Activated naive CD4-positive, alpha-beta T cell treated with anti-CD3 and anti-CD28 coated beads for 36 hours (primary cell): ENCODE measurements at regions of chr7 and their contacts with region 1.

Region 1: GRCh38 chr7:40329601-40330153 is 194.9 kb downstream of the SUGCT start:
- DNase-seq: no peak
- H3K4me3 Mint-ChIP-seq: no peak overlapping the region
- H3K27ac Mint-ChIP-seq: no peak overlapping the region
- H3K4me1 Mint-ChIP-seq: no peaks in the 10 kb centered on the region
- H3K27me3 Mint-ChIP-seq: no peaks in the 10 kb centered on the region

Region 2: GRCh38 chr7:40232242-40232893 is 97.3 kb before region 1 on chr7:
- CTCF ChIA-PET with region 1: interaction called, 7 read pairs
- intact Hi-C with region 1: loop called (anchors 2 kb)
- DNase-seq: peak; percentile 52
- H3K4me3 Mint-ChIP-seq: no peak overlapping the region
- H3K27ac Mint-ChIP-seq: no peak overlapping the region
- H3K4me1 Mint-ChIP-seq: peaks cover 8% of the 10 kb centered on the region
- H3K27me3 Mint-ChIP-seq: no peaks in the 10 kb centered on the region

Region 3: GRCh38 chr7:40604601-40605438 is 275.1 kb after region 1 on chr7:
- CTCF ChIA-PET with region 1: interaction called, 3 read pairs
- intact Hi-C with region 1: loop called (anchors 1 kb)
- DNase-seq: peak; percentile 41
- H3K4me3 Mint-ChIP-seq: no peak overlapping the region
- H3K27ac Mint-ChIP-seq: no peak overlapping the region
- H3K4me1 Mint-ChIP-seq: peaks cover 3% of the 10 kb centered on the region
- H3K27me3 Mint-ChIP-seq: peaks cover 15% of the 10 kb centered on the region

Region 4: DNA sequence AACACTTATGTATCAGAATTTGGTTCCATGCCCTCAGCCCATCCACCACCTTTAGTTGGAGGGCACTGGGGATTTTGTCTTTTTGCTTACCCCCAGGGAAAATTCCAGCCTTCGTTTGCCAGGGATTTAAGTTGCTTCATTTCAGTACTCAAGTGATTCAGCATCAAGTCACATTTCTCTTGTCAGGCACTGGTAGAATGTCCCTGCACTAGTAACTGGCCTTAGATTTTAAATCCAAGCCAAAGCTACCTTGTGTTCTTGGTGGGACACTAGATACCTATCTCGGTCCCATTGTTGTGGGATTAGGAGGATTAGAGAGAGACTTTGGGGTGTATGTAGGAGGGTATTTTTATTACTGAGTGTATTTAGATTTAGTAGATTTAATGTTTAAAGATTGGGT is 418.2 kb after region 1 on chr7:
- CTCF ChIA-PET with region 1: no interaction called
- intact Hi-C with region 1: no loop called
- DNase-seq: no peak
- H3K4me3 Mint-ChIP-seq: no peak overlapping the region
- H3K27ac Mint-ChIP-seq: no peak overlapping the region
- H3K4me1 Mint-ChIP-seq: no peaks in the 10 kb centered on the region
- H3K27me3 Mint-ChIP-seq: no peaks in the 10 kb centered on the region

Region 5: DNA sequence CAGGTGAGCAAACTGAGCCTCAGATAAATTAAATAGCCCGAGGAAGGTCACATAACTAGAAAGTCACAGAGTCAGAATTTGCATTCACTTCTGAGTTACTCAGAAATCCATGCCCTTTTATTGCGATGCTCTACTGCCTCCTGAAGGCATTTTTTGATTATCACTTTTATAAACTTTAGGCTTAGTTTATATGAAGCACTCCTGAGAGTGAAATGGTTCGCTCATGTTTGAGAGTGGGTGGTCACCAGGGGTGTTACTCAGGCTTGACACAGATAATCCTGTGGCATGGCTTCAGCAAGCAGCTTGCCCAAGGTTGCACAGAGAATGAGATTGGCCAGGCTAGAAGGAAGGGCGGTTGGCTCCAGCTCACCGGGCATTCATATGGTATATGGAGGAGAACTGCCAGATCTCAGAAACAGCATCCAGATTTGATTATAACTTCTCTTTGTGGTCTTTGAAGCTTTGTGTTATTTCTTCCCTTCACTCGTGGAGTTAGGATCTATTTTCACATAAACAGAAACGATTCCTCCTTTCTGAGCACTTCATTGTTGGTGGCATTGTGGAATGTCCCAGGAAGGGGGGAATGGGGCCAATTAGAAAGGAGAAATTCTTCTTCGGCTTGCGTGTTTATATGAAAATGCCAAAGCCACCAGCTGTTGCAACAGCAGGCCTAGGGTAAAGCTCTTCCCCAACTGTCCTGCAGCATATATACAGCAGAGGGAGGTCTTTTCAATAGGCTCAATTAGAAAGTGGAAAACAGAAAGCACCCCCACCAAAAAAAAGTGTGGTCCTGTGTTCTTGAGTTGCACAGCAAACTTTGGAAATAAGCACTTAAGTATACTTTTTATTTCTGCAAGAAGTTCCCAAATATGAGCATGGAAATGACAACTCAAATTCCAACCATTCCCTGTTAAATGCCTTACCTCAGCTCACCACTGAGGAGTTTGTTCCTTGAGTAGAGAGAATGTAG is 433.9 kb after region 1 on chr7:
- CTCF ChIA-PET with region 1: no interaction called
- intact Hi-C with region 1: loop called (anchors 1 kb)
- DNase-seq: no peak
- H3K4me3 Mint-ChIP-seq: no peak overlapping the region
- H3K27ac Mint-ChIP-seq: no peak overlapping the region
- H3K4me1 Mint-ChIP-seq: no peaks in the 10 kb centered on the region
- H3K27me3 Mint-ChIP-seq: no peaks in the 10 kb centered on the region

Region 6: GRCh38 chr7:41696314-41696916 is 1366.7 kb after region 1 on chr7:
- CTCF ChIA-PET with region 1: no interaction called
- intact Hi-C with region 1: loop called (anchors 1 kb)
- DNase-seq: peak; percentile 50
- H3K4me3 Mint-ChIP-seq: no peak overlapping the region
- H3K27ac Mint-ChIP-seq: no peak overlapping the region
- H3K4me1 Mint-ChIP-seq: peaks cover 13% of the 10 kb centered on the region
- H3K27me3 Mint-ChIP-seq: peaks cover 54% of the 10 kb centered on the region

Region 7: GRCh38 chr7:41711283-41712064 is 1381.8 kb after region 1 on chr7:
- CTCF ChIA-PET with region 1: no interaction called
- intact Hi-C with region 1: loop called (anchors 5 kb)
- DNase-seq: peak; percentile 19
- H3K4me3 Mint-ChIP-seq: no peak overlapping the region
- H3K27ac Mint-ChIP-seq: no peak overlapping the region
- H3K4me1 Mint-ChIP-seq: peaks cover 3% of the 10 kb centered on the region
- H3K27me3 Mint-ChIP-seq: peaks cover 32% of the 10 kb centered on the region